Lower leg skin (tissue), 4 donors: ENCODE measurements at regions of chr1 and their contacts with region 1.

Region 1: DNA sequence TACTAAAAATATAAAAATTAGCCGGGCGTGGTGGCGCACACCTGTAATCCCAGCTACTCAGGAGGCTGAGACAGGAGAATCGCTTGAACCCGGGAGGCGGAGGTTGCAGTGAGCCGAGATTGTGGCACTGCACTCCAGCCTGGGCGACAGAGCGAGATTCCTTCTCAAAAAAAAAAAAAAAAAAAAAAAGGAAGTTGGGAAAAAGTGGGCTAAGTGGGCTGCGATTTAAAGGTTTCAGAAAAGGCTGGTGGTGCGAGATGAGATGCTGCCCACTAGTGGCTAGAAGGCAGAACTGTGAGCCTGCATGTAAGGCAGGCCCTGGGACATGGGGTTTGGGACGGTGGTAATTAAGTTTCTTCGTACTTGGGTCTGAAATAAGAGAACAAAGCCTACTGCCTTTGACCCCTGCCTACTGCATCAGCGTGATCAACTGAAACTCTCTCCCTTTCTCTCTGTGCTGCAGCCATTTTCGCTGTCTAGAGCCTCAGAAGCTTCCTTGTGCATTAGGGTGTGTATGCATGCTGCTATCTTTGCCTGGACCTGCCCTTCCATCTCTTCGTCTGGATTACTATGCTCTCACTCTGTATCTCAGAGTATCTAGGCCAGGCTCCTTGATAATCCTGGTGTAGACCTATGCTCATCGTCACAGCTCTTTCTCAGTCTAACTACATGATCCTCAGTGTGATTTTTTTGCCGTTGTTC is 12.4 kb downstream of the FMOD start:
- DNase-seq: peak in 1 of 2 donors; percentile 91
- H3K4me3 ChIP-seq: no peak overlapping the region
- CTCF ChIP-seq: peak in 1 of 3 donors; percentile 64
- POLR2A ChIP-seq: no peak

Region 2: DNA sequence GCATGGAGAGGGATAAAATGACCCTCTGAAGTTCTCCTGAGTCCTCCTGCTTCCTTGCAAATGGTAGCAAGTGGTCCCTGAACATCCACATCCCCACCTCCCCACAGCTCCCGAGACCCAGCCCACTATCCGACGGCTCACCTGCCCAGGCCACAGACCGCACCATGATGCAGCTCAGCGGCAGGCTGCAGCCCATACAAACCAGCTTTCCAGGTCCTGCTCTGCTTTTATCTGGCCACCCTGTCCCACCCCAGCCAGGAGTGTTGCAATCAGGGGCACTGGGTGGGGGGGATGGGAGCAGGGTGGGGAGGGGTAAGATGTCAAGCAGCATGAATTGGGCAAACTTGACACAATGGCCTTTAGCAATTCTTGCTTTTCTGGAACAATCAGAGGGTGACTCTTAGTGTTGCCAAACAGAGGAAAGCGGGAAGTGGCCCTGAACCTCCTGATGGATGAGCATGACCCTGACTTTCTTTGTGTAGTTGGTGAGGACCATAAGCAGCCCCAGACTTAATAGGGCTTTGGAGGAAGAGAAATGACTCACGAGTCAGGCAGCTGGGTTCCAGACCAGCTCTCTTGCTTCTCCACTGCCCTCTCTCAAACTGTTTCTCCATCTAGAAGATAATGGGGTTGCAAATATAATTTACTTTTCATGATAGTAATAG is 108.9 kb before region 1 on chr1 and contains the start of gene CHIT1:
- intact Hi-C with region 1: no loop called
- DNase-seq: no peak
- H3K4me3 ChIP-seq: no peak within 1 kb of the TSS
- CTCF ChIP-seq: no peak
- POLR2A ChIP-seq: no peak
- total RNA-seq, gene CHIT1: 0.61 to 8.3 TPM in 2 of 4 donors, not detected in the others

Region 3: DNA sequence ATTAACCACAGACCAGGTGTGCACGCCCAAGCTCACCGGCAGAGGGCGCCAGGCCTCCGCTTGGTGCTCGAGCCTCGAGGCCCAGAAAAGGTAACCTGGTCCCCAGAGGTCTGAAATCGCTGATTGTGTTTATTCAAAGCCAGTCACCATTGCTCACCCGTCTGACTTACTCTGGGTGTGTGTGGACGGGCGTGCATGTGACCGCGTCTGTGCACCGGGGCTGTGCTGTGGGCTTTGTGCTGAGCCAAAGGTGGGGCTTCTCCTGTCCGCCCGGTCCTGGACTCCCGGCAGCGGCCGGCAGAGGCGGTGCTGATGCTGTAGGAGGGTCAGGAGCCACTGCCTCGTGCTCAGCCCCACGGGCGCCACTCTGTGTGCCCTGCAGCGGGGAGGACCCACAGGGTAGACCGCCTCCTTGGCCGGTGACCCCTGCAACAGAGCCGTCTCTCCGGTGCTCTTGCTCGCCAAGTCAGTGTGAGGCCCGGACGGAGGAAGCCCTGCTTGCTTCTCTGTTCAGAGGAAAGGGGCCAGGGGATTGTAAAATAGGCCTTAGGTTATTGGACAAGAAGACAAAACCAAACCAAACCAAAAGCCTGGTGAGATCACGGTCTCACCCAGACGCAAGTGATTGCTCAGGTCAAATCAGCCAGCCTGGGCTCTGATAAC is 65.1 kb before region 1 on chr1:
- intact Hi-C with region 1: loop called (anchors 5 kb)
- DNase-seq: peak; percentile 85 to 97
- H3K4me3 ChIP-seq: no peak overlapping the region
- CTCF ChIP-seq: peak in 1 of 3 donors; percentile 98
- POLR2A ChIP-seq: no peak